ENCODE measurements at regions of chr22 and their contacts with region 1.

Region 1: DNA sequence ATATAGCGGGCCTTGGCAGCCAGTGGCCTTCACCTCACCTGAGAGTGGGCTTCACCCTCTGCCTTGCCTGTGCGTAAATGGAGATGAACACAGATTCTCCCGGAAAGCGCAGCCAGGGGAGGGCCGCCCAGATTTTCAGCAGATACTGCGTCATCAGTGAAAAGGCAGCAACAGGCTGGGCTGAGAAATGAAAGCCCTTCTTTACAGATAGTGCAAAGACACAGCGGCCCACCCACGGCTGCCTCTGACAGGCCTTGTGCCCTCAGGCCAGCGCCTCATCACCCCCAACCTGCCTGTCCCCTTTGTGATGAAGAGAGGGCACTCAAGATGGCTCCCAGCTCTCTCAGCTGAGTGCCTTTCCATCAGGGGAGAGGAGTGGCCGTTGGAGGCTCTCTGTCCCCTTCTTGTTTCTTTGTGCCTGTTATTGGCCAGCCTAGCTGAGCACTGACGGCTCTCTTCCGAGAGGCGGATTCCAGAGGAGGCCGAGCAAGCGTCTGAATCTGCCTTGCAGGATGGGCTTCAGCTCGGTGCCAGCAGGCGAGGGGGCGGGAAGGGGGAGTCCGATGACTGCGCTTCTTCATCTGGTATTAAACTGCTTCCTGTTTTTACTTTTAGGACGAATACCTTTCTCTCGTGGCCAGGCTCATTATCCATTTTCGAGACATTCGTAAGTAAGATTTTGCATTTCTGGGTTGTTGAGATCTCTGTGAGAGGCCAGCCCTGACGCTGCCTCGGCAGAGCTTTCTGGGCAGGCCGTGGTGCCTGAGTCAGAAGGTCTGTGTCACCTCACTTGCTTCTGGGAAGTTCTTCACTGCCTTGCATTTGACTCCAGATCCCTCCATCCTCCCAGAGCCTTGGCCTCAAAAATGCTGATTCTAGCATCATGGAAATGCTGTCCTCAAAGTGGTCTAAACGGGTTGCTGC is 43.7 kb downstream of the MED15 start:
- DNase-seq: peak; percentile 32 to 79 (median 56)
- ATAC-seq: peak; percentile 24
- H3K4me3 ChIP-seq: peak overlapping the region; percentile 29
- H3K4me3 Mint-ChIP-seq: peak overlapping the region; percentile 87
- H3K27ac ChIP-seq: peak overlapping the region; percentile 86 to 89
- H3K27ac Mint-ChIP-seq: peak overlapping the region; percentile 92
- H3K4me1 ChIP-seq: peaks cover 96% of the 10 kb centered on the region
- H3K4me1 Mint-ChIP-seq: peaks cover 85% of the 10 kb centered on the region
- H3K27me3 ChIP-seq: no peaks in the 10 kb centered on the region
- H3K27me3 Mint-ChIP-seq: no peaks in the 10 kb centered on the region
- CTCF ChIP-seq: no peak

Region 2: DNA sequence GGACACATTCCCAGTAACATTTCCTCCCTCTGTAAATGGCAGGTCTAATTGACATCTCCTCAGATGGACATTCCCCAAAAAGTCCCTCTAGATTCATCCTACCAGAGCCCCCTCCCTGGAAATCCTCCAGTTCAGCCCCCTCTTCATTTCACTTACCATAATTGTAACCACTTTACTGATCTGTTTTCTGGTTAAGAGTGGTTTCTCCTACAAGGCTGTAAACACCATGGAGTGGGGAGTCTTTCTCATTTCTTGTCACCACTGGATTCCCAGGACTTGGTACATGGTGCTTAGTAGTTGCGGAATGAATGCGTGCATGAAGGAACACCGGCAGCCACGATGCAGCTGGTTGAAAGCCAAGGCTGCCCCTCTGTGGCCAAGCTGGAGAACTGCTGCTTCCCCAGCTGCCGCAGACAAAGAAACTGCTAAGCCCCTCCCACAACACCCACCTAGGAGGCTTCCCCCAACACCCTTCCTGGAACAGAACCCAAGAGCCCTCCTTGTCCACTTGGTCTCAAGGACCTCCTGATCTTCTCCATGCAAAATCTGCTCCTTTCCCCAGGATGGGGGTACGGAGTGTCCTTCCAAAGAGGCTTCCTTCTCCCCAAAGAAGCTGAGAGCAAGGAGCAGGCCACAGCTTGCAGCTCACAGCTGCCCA is 94.9 kb before region 1 on chr22:
- CTCF ChIA-PET with region 1: no interaction called
- POLR2A ChIA-PET with region 1: no interaction called
- intact Hi-C with region 1: loop called in 1 of 2 experiments (anchors 10 kb)
- DNase-seq: peak; percentile 60 to 90 (median 70)
- ATAC-seq: peak; percentile 100
- H3K4me3 ChIP-seq: no peak overlapping the region
- H3K4me3 Mint-ChIP-seq: no peak overlapping the region
- H3K27ac ChIP-seq: no peak overlapping the region
- H3K27ac Mint-ChIP-seq: no peak overlapping the region
- H3K4me1 ChIP-seq: peaks cover 26% of the 10 kb centered on the region
- H3K4me1 Mint-ChIP-seq: peaks cover 39% of the 10 kb centered on the region
- H3K27me3 ChIP-seq: no peaks in the 10 kb centered on the region
- H3K27me3 Mint-ChIP-seq: no peaks in the 10 kb centered on the region
- CTCF ChIP-seq: peak; percentile 89

Region 3: DNA sequence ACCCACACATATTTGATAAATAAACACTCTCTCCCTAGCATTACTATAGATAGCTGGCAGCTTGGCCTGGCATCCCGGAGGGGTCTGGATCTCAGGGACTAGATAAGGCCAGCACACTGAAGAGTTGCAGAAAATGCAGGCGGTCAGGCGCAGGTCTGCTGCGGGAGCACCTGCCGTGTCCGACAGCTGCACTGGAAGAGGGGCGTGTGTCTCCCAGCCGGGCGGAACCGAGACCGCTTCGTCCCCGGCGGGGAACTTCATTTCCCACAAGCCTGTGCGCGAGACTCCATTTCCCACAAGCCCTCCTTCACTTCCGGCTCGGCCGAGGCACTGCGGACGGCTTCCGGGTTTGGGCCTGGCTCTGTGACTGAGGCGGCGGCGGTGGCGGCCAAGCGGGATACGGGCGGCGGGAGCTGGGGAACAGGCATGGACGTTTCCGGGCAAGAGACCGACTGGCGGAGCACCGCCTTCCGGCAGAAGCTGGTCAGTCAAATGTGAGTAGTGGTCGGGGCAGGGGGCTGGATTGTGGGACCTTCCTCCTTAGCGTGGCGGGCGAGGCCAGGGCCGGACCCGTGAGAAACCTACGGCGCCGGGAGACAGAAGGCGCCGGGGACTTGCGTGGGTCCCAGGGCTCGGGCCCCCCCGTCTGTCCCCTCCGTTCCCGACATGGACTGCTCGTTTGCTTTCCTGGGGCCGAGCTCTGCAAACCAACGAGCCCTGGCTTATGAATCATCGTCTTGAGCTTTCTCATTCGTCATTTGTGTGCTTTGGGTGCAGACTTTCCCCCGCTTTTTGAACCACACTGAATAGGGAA is 43.6 kb before region 1 on chr22 and contains the start of gene MED15:
- CTCF ChIA-PET with region 1: interaction called, 4 read pairs
- POLR2A ChIA-PET with region 1: interaction called, 60 read pairs
- intact Hi-C with region 1: no loop called
- DNase-seq: peak; percentile 77 to 93 (median 84)
- ATAC-seq: peak; percentile 83
- H3K4me3 ChIP-seq: peak within 1 kb of the TSS; percentile 100
- H3K4me3 Mint-ChIP-seq: peak within 1 kb of the TSS; percentile 98
- H3K27ac ChIP-seq: peak within 1 kb of the TSS; percentile 88 to 90
- H3K27ac Mint-ChIP-seq: peak within 1 kb of the TSS; percentile 94
- H3K4me1 ChIP-seq: peaks cover 42% of the 10 kb centered on the region
- H3K4me1 Mint-ChIP-seq: peaks cover 51% of the 10 kb centered on the region
- H3K27me3 ChIP-seq: no peaks in the 10 kb centered on the region
- H3K27me3 Mint-ChIP-seq: no peaks in the 10 kb centered on the region
- CTCF ChIP-seq: no peak
- total RNA-seq, gene MED15: 181 to 191 TPM

Region 4: GRCh38 chr22:20514658-20515406 is 36.3 kb before region 1 on chr22:
- CTCF ChIA-PET with region 1: interaction called, 4 read pairs
- POLR2A ChIA-PET with region 1: interaction called, 60 read pairs
- intact Hi-C with region 1: loop called in 1 of 2 experiments (anchors 5 kb)
- DNase-seq: peak in 1 of 14 experiments; percentile 41
- ATAC-seq: no peak
- H3K4me3 ChIP-seq: no peak overlapping the region
- H3K4me3 Mint-ChIP-seq: peak overlapping the region; percentile 42
- H3K27ac ChIP-seq: no peak overlapping the region
- H3K27ac Mint-ChIP-seq: peak overlapping the region; percentile 24
- H3K4me1 ChIP-seq: peaks cover 78% of the 10 kb centered on the region
- H3K4me1 Mint-ChIP-seq: peaks cover 80% of the 10 kb centered on the region
- H3K27me3 ChIP-seq: no peaks in the 10 kb centered on the region
- H3K27me3 Mint-ChIP-seq: no peaks in the 10 kb centered on the region
- CTCF ChIP-seq: no peak

Region 5: GRCh38 chr22:20523086-20523983 is 27.7 kb before region 1 on chr22:
- CTCF ChIA-PET with region 1: interaction called, 3 read pairs
- POLR2A ChIA-PET with region 1: interaction called, 11 read pairs
- intact Hi-C with region 1: loop called in 1 of 2 experiments (anchors 5 kb)
- DNase-seq: peak in 5 of 14 experiments; percentile 27 to 56 (median 49)
- ATAC-seq: peak; percentile 61
- H3K4me3 ChIP-seq: no peak overlapping the region
- H3K4me3 Mint-ChIP-seq: peak overlapping the region; percentile 68
- H3K27ac ChIP-seq: peak overlapping the region; percentile 37 to 42
- H3K27ac Mint-ChIP-seq: peak overlapping the region; percentile 74
- H3K4me1 ChIP-seq: peaks cover 59% of the 10 kb centered on the region
- H3K4me1 Mint-ChIP-seq: peaks cover 72% of the 10 kb centered on the region
- H3K27me3 ChIP-seq: no peaks in the 10 kb centered on the region
- H3K27me3 Mint-ChIP-seq: no peaks in the 10 kb centered on the region
- CTCF ChIP-seq: no peak

Region 6: DNA sequence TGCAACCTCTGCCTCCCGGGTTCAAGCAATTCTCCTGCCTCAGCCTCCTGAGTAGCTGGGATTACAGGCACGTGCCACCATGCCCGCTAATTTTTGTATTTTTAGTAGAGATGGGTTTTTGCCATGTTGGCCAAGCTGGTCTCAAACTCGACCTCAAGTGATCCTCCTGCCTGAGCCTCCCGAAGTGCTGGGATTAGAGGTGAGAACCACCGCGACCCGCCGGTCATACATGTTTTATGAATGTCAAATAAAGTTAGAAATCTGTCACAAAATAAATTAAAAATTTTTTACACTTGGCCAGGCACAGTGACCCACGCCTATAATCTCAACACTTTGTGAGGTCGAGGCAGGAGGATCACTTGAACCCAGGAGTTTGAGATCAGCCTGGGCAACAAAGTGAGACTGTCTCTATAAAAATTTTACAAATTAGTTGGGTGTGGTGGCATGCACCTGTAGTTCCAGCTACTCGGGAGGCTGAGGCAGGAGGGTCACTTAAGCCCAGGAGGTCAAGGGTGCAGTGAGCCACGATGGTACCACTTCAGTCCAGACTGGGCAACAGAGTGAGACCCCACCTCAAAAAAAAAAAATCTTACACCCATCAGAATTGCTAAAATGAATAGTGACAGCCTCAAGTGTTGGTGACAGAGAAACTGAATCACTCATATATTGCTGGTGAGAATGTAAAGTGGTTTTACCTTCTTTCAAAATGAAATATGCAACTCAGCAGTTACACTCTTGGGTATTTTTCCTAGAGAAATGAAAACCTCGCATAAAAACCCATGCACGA is 11.6 kb after region 1 on chr22:
- CTCF ChIA-PET with region 1: interaction called, 107 read pairs
- POLR2A ChIA-PET with region 1: interaction called, 343 read pairs
- intact Hi-C with region 1: loop called in 1 of 2 experiments (anchors 1 kb)
- DNase-seq: no peak
- ATAC-seq: no peak
- H3K4me3 ChIP-seq: no peak overlapping the region
- H3K4me3 Mint-ChIP-seq: no peak overlapping the region
- H3K27ac ChIP-seq: no peak overlapping the region
- H3K27ac Mint-ChIP-seq: peak overlapping the region; percentile 93
- H3K4me1 ChIP-seq: peaks cover 64% of the 10 kb centered on the region
- H3K4me1 Mint-ChIP-seq: peaks cover 74% of the 10 kb centered on the region
- H3K27me3 ChIP-seq: no peaks in the 10 kb centered on the region
- H3K27me3 Mint-ChIP-seq: no peaks in the 10 kb centered on the region
- CTCF ChIP-seq: no peak

Region 7: DNA sequence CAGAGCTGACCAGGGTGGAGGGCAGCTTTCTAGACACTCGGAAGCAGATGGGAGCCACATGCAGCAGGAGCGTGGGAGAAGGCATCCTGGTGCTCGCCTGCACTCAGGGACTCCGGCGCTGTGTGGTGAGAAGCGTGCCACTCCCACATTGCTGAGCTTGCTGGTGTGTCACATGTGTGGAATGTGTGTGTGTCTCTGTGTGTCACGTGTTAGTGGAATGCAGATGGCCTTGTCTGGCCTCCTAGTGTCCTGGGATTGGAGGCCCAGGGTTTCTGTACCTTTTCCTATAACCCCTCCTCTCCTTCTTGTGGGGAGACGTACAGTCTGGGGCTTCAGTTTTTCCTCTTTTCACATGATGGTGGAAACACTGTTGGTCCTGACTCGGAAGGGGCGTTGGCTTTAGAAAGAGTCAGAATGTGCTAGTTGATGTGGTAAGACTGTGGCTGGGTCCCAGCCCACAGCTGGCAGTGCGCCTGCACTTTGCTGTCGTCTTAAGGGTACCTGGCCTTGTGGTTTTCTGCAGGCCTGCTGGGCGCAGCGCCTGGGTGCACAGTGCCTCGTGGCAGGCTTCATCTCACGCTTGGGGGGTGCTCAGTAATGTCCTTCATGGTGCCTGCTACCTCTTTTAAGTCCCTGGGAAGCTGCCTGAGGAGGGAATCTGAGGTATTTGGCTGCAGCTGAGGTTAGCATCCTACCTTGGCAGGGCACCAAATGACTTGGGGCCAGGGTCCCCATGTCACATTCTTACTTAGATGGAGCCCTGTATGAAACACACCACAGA is 18.1 kb after region 1 on chr22:
- CTCF ChIA-PET with region 1: interaction called, 107 read pairs
- POLR2A ChIA-PET with region 1: interaction called, 343 read pairs
- intact Hi-C with region 1: loop called in 1 of 2 experiments (anchors 2 kb)
- DNase-seq: peak; percentile 74 to 95 (median 84)
- ATAC-seq: peak; percentile 59
- H3K4me3 ChIP-seq: peak overlapping the region; percentile 27
- H3K4me3 Mint-ChIP-seq: peak overlapping the region; percentile 83
- H3K27ac ChIP-seq: peak overlapping the region; percentile 29 to 57
- H3K27ac Mint-ChIP-seq: peak overlapping the region; percentile 93
- H3K4me1 ChIP-seq: peaks cover 87% of the 10 kb centered on the region
- H3K4me1 Mint-ChIP-seq: peaks cover 89% of the 10 kb centered on the region
- H3K27me3 ChIP-seq: no peaks in the 10 kb centered on the region
- H3K27me3 Mint-ChIP-seq: no peaks in the 10 kb centered on the region
- CTCF ChIP-seq: no peak